OCI-LY7 (cell line): ENCODE measurements at regions of chr5 and their contacts with region 1.

Region 1: DNA sequence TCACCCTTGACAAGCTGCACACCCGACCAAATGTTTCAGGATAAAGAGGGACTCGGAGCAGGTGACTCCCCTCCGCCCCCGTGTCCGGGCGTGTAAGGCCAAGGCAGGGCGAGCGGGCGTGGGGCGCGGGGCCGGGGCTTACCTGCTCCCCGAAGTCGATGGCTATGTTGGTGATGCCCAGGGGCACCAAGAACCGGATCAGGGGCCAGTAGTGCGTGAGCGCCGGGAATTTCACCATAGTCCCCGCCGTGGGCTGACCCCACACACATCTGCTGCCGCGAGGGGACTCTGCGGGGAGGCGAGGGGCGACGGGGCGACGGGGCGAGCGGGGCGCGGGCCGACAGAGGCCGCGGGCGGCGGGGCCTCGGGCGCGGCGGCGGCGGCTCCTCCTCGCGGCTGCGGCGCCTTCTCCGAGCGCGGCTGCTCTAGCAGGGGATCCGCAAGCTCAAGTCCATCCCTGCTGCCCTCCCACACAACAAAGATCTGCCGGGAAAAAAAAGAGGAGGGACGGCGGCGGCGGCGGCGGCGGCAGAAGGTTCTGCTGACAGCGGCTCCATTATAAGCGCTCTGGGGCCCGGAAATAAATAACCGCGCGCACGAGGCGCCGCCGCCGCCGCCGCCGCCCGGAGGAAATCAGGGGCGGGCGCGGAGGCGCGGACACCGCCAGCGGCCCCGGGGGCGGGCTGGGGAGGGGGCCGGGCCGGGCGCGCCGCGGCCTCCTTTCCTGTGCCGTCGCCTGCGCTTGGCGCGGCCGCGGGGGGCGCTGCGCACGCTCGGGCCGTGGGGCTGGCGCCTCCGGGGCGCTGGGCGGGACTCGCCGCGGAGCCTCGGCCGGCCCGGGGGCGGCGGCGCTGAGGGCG is at the start of gene ANKH:
- DNase-seq: peak; percentile 89
- H3K4me3 ChIP-seq: peak within 1 kb of the TSS; percentile 97
- H3K27ac ChIP-seq: peak within 1 kb of the TSS; percentile 45
- H3K4me1 ChIP-seq: peaks cover 26% of the 10 kb centered on the region
- CTCF ChIP-seq: no peak
- total RNA-seq, gene ANKH: 23.1 and 35.2 TPM in 2 replicates

Region 2: GRCh38 chr5:14035859-14036440 is 835.5 kb before region 1 on chr5:
- CTCF ChIA-PET with region 1: no interaction called
- POLR2A ChIA-PET with region 1: no interaction called
- intact Hi-C with region 1: no loop called
- DNase-seq: no peak
- H3K4me3 ChIP-seq: no peak overlapping the region
- H3K27ac ChIP-seq: no peak overlapping the region
- H3K4me1 ChIP-seq: no peaks in the 10 kb centered on the region
- CTCF ChIP-seq: no peak

Region 3: GRCh38 chr5:14664302-14665100 is 206.9 kb before region 1 on chr5 and contains the start of gene OTULIN:
- CTCF ChIA-PET with region 1: no interaction called
- POLR2A ChIA-PET with region 1: interaction called, 3 read pairs
- intact Hi-C with region 1: loop called (anchors 1 kb)
- DNase-seq: peak; percentile 94
- H3K4me3 ChIP-seq: peak within 1 kb of the TSS; percentile 87
- H3K27ac ChIP-seq: peak within 1 kb of the TSS; percentile 90
- H3K4me1 ChIP-seq: peaks cover 67% of the 10 kb centered on the region
- CTCF ChIP-seq: no peak
- total RNA-seq, gene OTULIN: 19.2 and 28.7 TPM in 2 replicates

Region 4: DNA sequence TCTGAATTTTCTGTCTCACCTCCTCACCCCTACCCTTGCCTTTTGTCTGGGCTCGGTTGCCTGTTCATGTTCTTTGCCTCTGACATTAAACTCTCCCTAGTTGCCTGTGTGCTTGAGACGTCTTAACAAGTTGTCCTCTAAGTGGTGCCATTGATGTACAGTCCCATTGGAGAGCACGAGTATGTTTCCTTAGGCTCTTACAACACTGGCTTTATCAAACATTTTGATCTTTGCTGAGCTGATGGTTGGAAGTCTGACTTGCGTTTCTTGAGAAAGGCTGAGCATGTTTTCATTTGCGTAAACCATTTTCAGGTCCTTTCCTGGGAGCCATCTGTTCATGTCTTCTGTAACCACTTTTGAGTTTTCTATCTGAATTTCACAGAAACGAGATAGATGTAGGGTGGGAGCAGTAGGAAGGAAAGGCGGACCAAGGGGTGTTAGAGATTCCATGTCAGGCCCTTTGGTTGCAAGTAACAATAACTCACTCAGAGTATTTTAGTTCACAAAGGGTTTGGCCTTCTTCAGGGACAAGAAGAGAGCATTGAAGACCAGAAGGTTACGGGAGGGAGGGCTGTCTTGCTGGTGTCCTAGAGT is 171.5 kb before region 1 on chr5:
- CTCF ChIA-PET with region 1: no interaction called
- POLR2A ChIA-PET with region 1: no interaction called
- intact Hi-C with region 1: no loop called
- DNase-seq: no peak
- H3K4me3 ChIP-seq: no peak overlapping the region
- H3K27ac ChIP-seq: no peak overlapping the region
- H3K4me1 ChIP-seq: no peaks in the 10 kb centered on the region
- CTCF ChIP-seq: no peak

Region 5: DNA sequence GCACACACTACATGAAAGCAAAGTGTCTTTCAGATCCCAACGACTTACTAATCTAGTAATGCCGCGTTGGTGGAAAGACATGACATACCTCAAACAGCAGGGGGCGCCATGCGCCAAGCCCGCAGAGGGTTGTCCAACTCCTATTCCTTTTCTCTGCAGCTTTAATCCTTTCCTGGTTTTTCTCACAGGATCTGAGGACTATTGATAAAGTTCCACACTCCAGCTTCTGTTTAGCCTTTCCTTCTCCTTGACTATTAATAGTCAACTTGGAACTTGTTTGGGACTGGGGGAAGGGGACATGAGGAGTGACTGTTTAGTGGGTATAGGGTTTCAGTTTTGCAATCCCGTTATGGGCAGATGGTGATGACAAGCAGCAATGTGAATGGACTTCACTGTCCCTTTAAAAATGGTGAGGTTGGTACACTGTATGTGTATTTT is 144.0 kb before region 1 on chr5:
- CTCF ChIA-PET with region 1: interaction called, 3 read pairs
- POLR2A ChIA-PET with region 1: interaction called, 4 read pairs
- intact Hi-C with region 1: loop called (anchors 1 kb)
- DNase-seq: peak; percentile 79
- H3K4me3 ChIP-seq: no peak overlapping the region
- H3K27ac ChIP-seq: no peak overlapping the region
- H3K4me1 ChIP-seq: no peaks in the 10 kb centered on the region
- CTCF ChIP-seq: peak; percentile 99

Region 6: GRCh38 chr5:14743601-14744295 is 127.7 kb before region 1 on chr5:
- CTCF ChIA-PET with region 1: no interaction called
- POLR2A ChIA-PET with region 1: interaction called, 4 read pairs
- intact Hi-C with region 1: loop called (anchors 5 kb)
- DNase-seq: no peak
- H3K4me3 ChIP-seq: no peak overlapping the region
- H3K27ac ChIP-seq: peak overlapping the region; percentile 86
- H3K4me1 ChIP-seq: peaks cover 38% of the 10 kb centered on the region
- CTCF ChIP-seq: no peak

Region 7: GRCh38 chr5:14809369-14810155 is 61.9 kb before region 1 on chr5:
- CTCF ChIA-PET with region 1: no interaction called
- POLR2A ChIA-PET with region 1: interaction called, 4 read pairs
- intact Hi-C with region 1: loop called (anchors 2 kb)
- DNase-seq: peak; percentile 87
- H3K4me3 ChIP-seq: peak overlapping the region; percentile 51
- H3K27ac ChIP-seq: peak overlapping the region; percentile 67
- H3K4me1 ChIP-seq: peaks cover 40% of the 10 kb centered on the region
- CTCF ChIP-seq: no peak

Region 8: DNA sequence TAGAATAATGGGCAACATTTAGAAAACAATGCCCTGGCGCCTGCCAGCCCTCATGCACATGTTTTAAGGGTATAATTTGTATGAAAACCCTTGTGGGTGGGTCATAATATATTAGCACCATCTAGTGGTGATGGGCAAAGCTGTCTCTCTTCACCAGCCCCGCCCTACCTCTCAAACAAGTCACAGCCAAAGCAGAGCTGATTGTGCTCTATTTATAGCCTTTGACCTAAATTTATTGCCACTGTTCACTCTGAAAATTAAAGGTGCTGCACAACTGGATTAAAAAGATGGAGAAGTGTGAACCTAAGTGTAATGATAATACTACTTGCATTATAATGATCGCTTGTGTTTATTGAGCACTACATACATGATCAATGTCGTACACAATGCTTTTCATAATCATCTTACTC is 132.1 kb after region 1 on chr5:
- CTCF ChIA-PET with region 1: no interaction called
- POLR2A ChIA-PET with region 1: no interaction called
- intact Hi-C with region 1: loop called (anchors 5 kb)
- DNase-seq: peak; percentile 69
- H3K4me3 ChIP-seq: no peak overlapping the region
- H3K27ac ChIP-seq: no peak overlapping the region
- H3K4me1 ChIP-seq: no peaks in the 10 kb centered on the region
- CTCF ChIP-seq: peak; percentile 93